ENCODE measurements at regions of chr10 and their contacts with region 1.

Region 1: GRCh38 chr10:101646364-101646763 is 48.6 kb downstream of the FBXW4 start:
- DNase-seq: no peak
- ATAC-seq: no peak
- H3K4me3 Mint-ChIP-seq: no peak overlapping the region
- H3K27ac Mint-ChIP-seq: no peak overlapping the region
- H3K4me1 Mint-ChIP-seq: peaks cover 48% of the 10 kb centered on the region
- H3K27me3 Mint-ChIP-seq: no peaks in the 10 kb centered on the region
- CTCF ChIP-seq: no peak

Region 2: GRCh38 chr10:101617102-101617823 is 29.1 kb before region 1 on chr10:
- CTCF ChIA-PET with region 1: interaction called, 11 read pairs
- POLR2A ChIA-PET with region 1: interaction called, 3 read pairs
- DNase-seq: no peak
- ATAC-seq: peak; percentile 61
- H3K4me3 Mint-ChIP-seq: no peak overlapping the region
- H3K27ac Mint-ChIP-seq: peak overlapping the region; percentile 60
- H3K4me1 Mint-ChIP-seq: peaks cover 22% of the 10 kb centered on the region
- H3K27me3 Mint-ChIP-seq: no peaks in the 10 kb centered on the region
- CTCF ChIP-seq: no peak